HCT116 (cell line): ENCODE measurements at regions of chr2 and their contacts with region 1.

Region 1: GRCh38 chr2:73233154-73233931 is at the start of gene PRADC1:
- DNase-seq: peak; percentile 99
- ATAC-seq: peak; percentile 89
- H3K4me3 ChIP-seq: peak within 1 kb of the TSS; percentile 90 to 93
- H3K27ac ChIP-seq: peak within 1 kb of the TSS; percentile 88
- H3K4me1 ChIP-seq: peaks cover 10 to 27% of the 10 kb centered on the region in 2 experiments; a peak in 3 of 4 replicates
- H3K27me3 ChIP-seq: no peaks in the 10 kb centered on the region
- CTCF ChIP-seq: no peak
- POLR2A ChIP-seq: no peak
- RAD21 ChIP-seq: no peak
- total RNA-seq, gene PRADC1: 8.6 TPM

Region 2: GRCh38 chr2:72833084-72833709 is 400.1 kb before region 1 on chr2:
- CTCF ChIA-PET with region 1: no interaction called
- POLR2A ChIA-PET with region 1: no interaction called
- RAD21 ChIA-PET with region 1: no interaction called
- intact Hi-C with region 1: no loop called
- DNase-seq: no peak
- ATAC-seq: no peak
- H3K4me3 ChIP-seq: no peak overlapping the region
- H3K27ac ChIP-seq: no peak overlapping the region
- H3K4me1 ChIP-seq: peaks cover 0 to 2% of the 10 kb centered on the region in 2 experiments; a peak in 3 of 4 replicates
- H3K27me3 ChIP-seq: no peaks in the 10 kb centered on the region
- CTCF ChIP-seq: no peak
- POLR2A ChIP-seq: no peak
- RAD21 ChIP-seq: no peak

Region 3: GRCh38 chr2:73212448-73213176 is 20.7 kb before region 1 on chr2:
- CTCF ChIA-PET with region 1: interaction called, 6 read pairs
- POLR2A ChIA-PET with region 1: interaction called, 8 read pairs
- RAD21 ChIA-PET with region 1: no interaction called
- intact Hi-C with region 1: loop called (anchors 1 kb)
- DNase-seq: no peak
- ATAC-seq: peak; percentile 81
- H3K4me3 ChIP-seq: no peak overlapping the region
- H3K27ac ChIP-seq: no peak overlapping the region
- H3K4me1 ChIP-seq: peaks cover 3 to 34% of the 10 kb centered on the region in 2 experiments; a peak in 3 of 4 replicates
- H3K27me3 ChIP-seq: no peaks in the 10 kb centered on the region
- CTCF ChIP-seq: peak; percentile 78 to 99 (median 95)
- POLR2A ChIP-seq: no peak
- RAD21 ChIP-seq: peak; percentile 78

Region 4: GRCh38 chr2:73297151-73297559 is 63.8 kb after region 1 on chr2:
- CTCF ChIA-PET with region 1: no interaction called
- POLR2A ChIA-PET with region 1: no interaction called
- RAD21 ChIA-PET with region 1: no interaction called
- intact Hi-C with region 1: no loop called
- DNase-seq: no peak
- ATAC-seq: no peak
- H3K4me3 ChIP-seq: no peak overlapping the region
- H3K27ac ChIP-seq: no peak overlapping the region
- H3K4me1 ChIP-seq: peaks cover 10 to 17% of the 10 kb centered on the region in 2 experiments; a peak in 3 of 4 replicates
- H3K27me3 ChIP-seq: peaks cover 17% of the 10 kb centered on the region; the same call in 1 of the 2 replicates
- CTCF ChIP-seq: no peak
- POLR2A ChIP-seq: no peak
- RAD21 ChIP-seq: no peak